ENCODE measurements at regions of chr3 and their contacts with region 1.

Region 1: GRCh38 chr3:149352556-149352955 is 19.1 kb upstream of the TM4SF18 start:
- DNase-seq: peak; percentile 84
- ATAC-seq: peak; percentile 93
- H3K4me3 ChIP-seq: no peak overlapping the region
- H3K27ac ChIP-seq: peak overlapping the region; percentile 38
- H3K4me1 ChIP-seq: peaks cover 9% of the 10 kb centered on the region; the same call in 1 of the 2 replicates
- H3K27me3 ChIP-seq: no peaks in the 10 kb centered on the region
- CTCF ChIP-seq: peak; percentile 91

Region 2: GRCh38 chr3:149299938-149300791 is 52.4 kb before region 1 on chr3:
- CTCF ChIA-PET with region 1: no interaction called
- POLR2A ChIA-PET with region 1: no interaction called
- intact Hi-C with region 1: no loop called
- DNase-seq: peak; percentile 98
- ATAC-seq: peak; percentile 93
- H3K4me3 ChIP-seq: peak overlapping the region; percentile 35; the same call in 1 of the 2 replicates
- H3K27ac ChIP-seq: peak overlapping the region; percentile 98
- H3K4me1 ChIP-seq: peaks cover 48% of the 10 kb centered on the region
- H3K27me3 ChIP-seq: no peaks in the 10 kb centered on the region
- CTCF ChIP-seq: no peak

Region 3: DNA sequence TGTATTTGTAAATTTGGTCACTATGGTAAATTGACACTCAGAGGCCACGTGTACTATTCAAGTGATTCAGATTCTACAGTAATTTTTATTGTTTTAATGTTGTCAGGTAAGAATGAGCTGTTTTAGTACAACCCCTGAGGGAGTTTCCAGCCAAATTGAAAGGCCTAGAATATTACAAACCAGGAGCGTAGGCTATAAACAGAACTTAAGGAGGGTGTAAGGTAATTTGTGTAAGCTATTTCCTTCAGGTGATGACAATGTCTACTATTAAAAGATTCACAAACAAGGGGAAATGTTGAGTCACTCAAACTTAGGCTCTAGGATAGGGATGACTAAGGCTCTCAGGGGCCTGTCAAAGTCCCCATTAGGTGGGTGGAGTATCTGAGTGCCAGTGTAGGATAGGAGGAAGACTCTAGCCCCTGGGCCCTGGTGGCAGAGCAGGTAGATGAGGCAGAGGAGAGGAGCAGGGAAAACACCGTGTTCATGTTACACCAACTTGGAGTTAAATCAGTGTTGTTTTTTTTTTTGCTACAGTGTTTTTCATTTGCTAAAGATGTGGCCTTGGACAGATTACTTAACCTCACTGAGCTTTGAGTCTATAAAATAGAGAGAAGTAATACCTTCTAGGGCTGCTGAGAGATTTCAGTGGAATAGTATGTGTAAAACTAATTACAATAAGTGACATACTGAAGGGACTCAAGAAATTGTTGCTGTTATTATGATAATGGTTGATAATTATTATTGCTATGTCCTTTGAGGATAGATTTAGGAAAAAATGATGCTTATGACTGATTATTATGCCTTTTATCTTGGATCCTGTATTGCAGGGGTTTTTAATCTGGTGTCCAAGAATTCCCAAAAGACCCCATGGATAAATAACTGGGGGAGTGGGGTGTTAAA is 14.6 kb after region 1 on chr3:
- CTCF ChIA-PET with region 1: no interaction called
- POLR2A ChIA-PET with region 1: no interaction called
- intact Hi-C with region 1: loop called (anchors 2 kb)
- DNase-seq: peak; percentile 99
- ATAC-seq: peak; percentile 77
- H3K4me3 ChIP-seq: 0 out of 2 replicates have a peak overlapping the region, but pooled peaks have one; percentile 27
- H3K27ac ChIP-seq: peak overlapping the region; percentile 99
- H3K4me1 ChIP-seq: peaks cover 66% of the 10 kb centered on the region
- H3K27me3 ChIP-seq: no peaks in the 10 kb centered on the region
- CTCF ChIP-seq: no peak

Region 4: DNA sequence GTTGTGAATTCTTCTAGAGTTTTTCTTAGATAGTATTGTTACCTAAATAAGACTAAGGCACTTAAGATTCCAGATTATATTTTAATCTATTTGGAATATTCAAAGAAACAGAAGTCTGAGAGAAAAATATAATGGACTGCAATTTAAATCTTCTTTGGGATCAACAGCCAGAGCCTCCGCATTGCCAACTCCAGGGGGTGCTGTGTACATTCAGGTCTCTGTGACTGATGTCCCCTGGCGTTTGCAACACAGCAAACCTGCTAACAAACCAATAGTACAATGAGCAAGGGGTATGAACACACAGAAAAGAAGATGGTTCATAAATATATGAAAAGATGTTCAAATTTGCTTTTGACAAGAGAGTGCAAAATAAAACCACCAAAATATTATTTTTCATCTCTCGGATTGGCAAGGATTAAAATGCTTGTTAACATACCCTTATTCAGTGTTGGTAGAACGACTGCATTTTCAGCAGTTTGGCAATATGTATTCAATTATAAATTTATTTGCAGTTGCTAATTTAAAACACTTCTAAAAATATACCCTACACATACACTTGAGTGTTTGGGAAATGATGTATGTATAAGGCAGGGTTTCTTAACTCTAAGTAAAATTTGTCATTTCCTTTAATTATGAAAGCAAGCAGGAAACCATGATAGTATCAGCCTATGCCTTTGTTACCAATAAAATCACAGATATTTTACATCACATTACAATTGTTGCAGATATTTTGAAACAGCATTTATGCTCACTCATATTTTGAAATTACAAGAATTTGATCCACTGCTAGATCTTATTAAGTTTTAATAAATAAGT is 41.0 kb after region 1 on chr3:
- CTCF ChIA-PET with region 1: no interaction called
- POLR2A ChIA-PET with region 1: no interaction called
- intact Hi-C with region 1: loop called (anchors 1 kb)
- DNase-seq: peak; percentile 84
- ATAC-seq: peak; percentile 16; the same call in 1 of the 2 replicates
- H3K4me3 ChIP-seq: no peak overlapping the region
- H3K27ac ChIP-seq: peak overlapping the region; percentile 96
- H3K4me1 ChIP-seq: peaks cover 81% of the 10 kb centered on the region
- H3K27me3 ChIP-seq: no peaks in the 10 kb centered on the region
- CTCF ChIP-seq: peak; percentile 99

Region 5: GRCh38 chr3:149480325-149481017 is 127.9 kb after region 1 on chr3:
- CTCF ChIA-PET with region 1: interaction called, 5 read pairs
- POLR2A ChIA-PET with region 1: no interaction called
- intact Hi-C with region 1: loop called (anchors 1 kb)
- DNase-seq: peak; percentile 94
- ATAC-seq: peak; percentile 96
- H3K4me3 ChIP-seq: no peak overlapping the region
- H3K27ac ChIP-seq: peak overlapping the region; percentile 55
- H3K4me1 ChIP-seq: peaks cover 17% of the 10 kb centered on the region
- H3K27me3 ChIP-seq: no peaks in the 10 kb centered on the region
- CTCF ChIP-seq: peak; percentile 98

Measured in PC-3 (cell line).